Gastrocnemius medialis (tissue), 4 donors: ENCODE measurements at regions of chr2 and their contacts with region 1.

Region 1: DNA sequence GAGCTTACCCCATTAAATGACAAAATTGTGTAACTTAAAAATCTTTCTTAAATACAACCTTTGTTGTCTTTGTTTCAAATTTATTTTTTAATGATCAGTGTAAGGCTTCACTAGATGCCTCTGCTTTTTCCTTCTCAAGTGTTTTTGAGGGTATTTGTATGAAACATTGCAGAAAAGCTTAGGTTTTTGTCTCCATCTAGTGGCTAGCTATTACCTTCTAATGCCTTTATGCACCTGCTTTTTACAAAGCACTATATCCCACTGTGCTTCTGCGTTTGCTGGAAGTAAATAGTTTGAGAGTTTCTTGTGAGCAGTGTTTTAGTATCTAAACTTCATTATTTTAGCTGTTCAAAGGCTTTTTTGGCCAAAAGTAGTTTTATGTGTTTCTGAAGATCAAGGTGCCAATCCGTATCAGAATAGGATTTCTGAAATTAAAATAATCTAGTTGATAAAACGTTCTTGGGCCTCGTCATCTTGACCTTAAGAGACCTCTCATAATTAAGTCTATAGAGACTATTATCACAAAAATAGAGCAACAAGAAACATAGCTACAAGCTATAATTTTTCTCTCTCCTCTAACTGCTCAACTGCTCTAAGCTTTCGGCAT is 47.0 kb downstream of the IWS1 start:
- DNase-seq: no peak
- ATAC-seq: peak in 1 of 2 donors; percentile 62
- H3K4me3 ChIP-seq: no peak overlapping the region
- H3K27ac ChIP-seq: no peak overlapping the region
- H3K4me1 ChIP-seq: no peaks in the 10 kb centered on the region
- H3K27me3 ChIP-seq: no peaks in the 10 kb centered on the region
- CTCF ChIP-seq: peak in 4 of 5 experiments; percentile 48 to 68 (median 60)
- POLR2A ChIP-seq: no peak

Region 2: GRCh38 chr2:127197475-127198385 is 281.6 kb before region 1 on chr2:
- in situ Hi-C with region 1: no loop called
- intact Hi-C with region 1: loop called (anchors 10 kb)
- DNase-seq: peak in 1 of 2 donors; percentile 65
- ATAC-seq: peak; percentile 28 to 53
- H3K4me3 ChIP-seq: no peak overlapping the region
- H3K27ac ChIP-seq: no peak overlapping the region
- H3K4me1 ChIP-seq: peaks cover 16 to 17% of the 10 kb centered on the region in 2 donors
- H3K27me3 ChIP-seq: no peaks in the 10 kb centered on the region
- CTCF ChIP-seq: peak; percentile 25 to 55 (median 49)
- POLR2A ChIP-seq: no peak

Region 3: DNA sequence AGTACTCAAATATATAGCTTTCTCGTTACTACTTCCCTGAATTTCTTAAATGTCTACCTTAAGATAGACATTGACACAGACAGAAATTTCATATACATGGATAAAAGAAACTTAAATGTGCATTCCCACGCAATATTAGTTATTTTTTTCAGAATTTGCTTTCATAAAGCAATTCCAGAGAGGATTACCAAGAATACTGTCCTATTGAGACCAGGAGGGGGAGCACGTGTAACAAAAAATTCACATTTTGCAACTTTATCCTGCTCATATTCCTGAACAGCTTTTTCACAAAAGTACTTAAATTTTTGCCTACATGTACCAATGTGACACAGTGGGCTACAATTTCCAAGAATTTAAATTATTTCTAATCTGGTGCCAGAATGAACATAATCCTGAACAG is 154.7 kb before region 1 on chr2:
- in situ Hi-C with region 1: loop called in 3 of 4 experiments (anchors 10 to 25 kb)
- intact Hi-C with region 1: loop called (anchors 5 kb)
- DNase-seq: no peak
- ATAC-seq: no peak
- H3K4me3 ChIP-seq: no peak overlapping the region
- H3K27ac ChIP-seq: no peak overlapping the region
- H3K4me1 ChIP-seq: no peaks in the 10 kb centered on the region
- H3K27me3 ChIP-seq: no peaks in the 10 kb centered on the region
- CTCF ChIP-seq: peak; percentile 9 to 39 (median 38)
- POLR2A ChIP-seq: no peak

Region 4: DNA sequence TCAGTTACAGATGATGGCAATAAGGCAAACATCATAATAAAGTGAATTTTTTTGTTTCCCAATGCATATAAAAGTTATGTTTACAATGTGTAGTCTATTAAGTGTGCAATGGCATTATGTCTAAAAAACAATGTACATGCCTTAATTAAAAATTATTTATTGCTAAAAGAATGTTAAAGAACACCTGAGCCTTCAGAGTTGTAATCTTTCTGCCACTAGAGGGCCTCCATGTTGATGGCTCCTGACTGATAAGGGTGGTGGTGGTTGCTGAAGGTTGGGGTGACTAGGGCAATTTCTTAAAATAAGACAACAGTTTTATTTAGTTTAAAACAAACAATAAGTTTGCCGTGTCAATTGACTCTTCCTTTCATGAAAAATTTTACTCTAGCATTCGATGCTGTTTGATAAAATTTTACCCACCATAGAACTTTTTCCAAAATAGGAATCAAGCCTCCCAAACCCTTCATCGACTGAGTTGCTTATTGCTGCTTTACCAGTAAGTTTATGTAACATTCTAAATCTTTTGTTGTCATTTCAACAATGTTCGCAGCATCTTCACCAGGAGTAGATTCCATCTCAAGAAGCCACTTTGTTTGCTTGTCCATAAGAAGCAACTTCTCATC is 123.8 kb before region 1 on chr2:
- in situ Hi-C with region 1: no loop called
- intact Hi-C with region 1: loop called (anchors 5 kb)
- DNase-seq: no peak
- ATAC-seq: peak in 1 of 2 donors; percentile 62
- H3K4me3 ChIP-seq: no peak overlapping the region
- H3K27ac ChIP-seq: no peak overlapping the region
- H3K4me1 ChIP-seq: peaks cover 35 to 40% of the 10 kb centered on the region in 2 donors
- H3K27me3 ChIP-seq: no peaks in the 10 kb centered on the region
- CTCF ChIP-seq: peak; percentile 49 to 69 (median 53)
- POLR2A ChIP-seq: no peak